Right ventricle myocardium superior (tissue), 1 donor: ENCODE measurements at regions of chr11 and their contacts with region 1.

Region 1: DNA sequence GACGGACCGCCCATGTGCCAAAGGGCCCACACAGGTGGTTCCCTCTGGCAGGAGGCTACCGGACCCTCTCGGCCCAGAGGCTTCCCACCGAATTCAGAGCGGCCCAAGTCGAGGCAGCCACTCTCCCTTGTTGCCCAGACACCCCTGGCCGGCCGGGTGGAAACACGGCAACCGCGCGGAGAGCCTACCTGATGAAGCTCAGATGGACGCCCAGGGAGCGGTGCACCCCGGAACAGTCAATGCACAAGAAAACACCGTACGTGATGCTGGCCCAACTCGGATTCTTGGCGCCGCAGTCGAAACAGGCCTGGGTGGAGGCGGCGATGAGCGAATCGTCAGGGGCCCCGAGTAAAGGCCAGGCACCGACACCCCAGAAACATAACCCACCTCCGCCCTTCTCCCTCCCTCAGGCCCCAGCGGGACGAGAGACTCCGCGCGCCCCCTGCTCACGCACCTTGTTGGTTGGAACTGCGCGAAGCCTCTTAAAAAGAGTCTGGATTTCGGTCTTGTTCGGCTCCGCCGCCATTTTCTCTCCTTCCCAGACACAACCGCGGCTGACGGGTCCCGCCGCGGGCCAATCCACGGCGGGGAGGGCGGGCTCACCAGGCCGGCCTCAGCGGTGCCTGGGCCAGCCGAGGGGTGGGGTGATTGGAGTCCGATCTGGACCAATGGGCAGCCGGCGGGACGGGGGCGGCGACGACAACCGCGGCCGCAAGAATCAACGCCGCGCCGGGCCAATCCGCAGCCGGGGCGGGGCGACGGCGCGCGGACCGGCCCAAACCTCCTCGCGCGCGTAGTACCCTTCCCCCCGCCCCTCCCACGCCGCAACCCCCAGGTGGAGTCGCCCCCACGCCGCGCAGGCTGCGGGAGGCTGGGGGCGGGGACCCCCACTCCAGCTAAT is at the start of gene ARFGAP2:
- DNase-seq: peak; percentile 98
- ATAC-seq: peak; percentile 91
- total RNA-seq, gene ARFGAP2: 46.1 TPM

Region 2: DNA sequence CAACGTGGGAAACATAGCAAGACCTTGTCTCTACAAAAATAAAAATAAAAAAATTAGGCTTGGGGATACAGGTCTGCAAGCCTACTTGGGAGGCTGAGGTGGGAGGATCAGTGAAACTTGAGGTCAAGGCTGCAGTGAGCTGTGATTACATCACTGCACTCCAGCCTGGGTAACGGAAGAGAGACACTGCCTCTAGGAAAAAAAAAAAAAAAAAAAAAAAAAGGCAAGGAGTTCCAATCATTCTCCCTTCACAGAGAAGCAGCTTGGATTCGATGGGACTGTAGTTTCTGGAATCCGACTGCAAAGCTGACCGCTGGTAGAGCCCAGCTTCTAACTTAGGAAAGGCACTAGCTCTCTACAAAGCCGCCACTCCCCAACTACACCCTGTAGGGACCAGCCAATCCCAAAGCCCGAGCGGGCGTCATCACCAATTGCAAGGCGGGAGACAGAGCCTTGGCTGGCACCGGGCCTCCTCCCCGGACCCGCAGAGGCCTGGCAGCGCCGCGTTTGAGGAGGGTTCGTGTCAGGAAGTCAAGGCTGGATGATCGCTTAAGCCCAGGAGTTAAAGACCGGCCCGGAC is 37.5 kb after region 1 on chr11:
- intact Hi-C with region 1: loop called (anchors 2 kb)
- DNase-seq: peak; percentile 96
- ATAC-seq: peak; percentile 95

Region 3: GRCh38 chr11:47355283-47356128 is 178.9 kb after region 1 on chr11:
- intact Hi-C with region 1: loop called (anchors 5 kb)
- DNase-seq: peak; percentile 98
- ATAC-seq: peak; percentile 65